Posterior cingulate gyrus (tissue), 11 donors: ENCODE measurements at regions of chr19 and their contacts with region 1.

Region 1: DNA sequence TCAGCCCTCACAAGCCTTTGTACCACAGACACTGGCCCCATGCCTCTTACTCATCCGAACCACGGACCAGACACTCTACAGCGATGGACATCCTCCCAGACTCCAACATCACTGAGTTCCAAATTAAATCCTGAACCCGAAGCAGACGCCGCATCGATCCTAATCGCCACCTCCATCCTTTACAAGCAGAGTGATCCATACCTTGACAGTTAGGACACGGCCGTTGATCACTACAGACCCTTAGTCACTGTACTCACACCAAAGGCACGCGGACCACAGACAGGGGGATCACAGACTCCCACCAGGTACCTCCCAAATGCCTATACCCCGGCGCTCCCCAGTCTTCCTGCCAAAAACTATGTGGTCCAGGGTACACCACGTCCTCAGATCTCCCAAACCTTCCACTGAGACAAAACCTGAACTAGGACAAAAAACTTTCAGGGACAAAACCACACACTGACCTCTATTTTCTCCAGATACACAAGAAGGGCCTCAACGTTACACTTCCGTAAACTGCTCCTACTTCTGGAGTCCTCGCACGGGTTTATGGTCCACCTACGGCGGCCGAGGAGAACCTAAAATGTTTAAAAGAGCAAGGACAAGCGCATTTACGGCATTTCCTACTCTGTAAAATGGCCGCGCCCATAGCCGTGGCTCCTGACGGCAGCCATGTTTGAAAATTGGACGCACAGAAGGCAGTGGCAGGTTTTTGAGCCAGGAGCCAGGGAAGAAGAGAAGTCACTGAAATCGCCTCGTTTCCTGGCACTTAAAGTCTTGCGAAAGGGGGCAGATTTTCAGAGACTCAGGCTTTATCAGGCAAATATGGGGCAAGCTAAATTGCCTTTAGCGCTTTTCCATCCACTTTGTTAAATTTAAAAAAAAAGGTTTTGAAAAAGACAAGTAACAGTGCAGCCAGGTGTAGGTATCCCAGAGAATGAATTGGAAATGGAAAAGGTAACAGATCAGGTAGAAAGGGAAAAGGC is at the start of gene ZNF350:
- DNase-seq: peak; percentile 90 to 99 (median 96)

Region 2: DNA sequence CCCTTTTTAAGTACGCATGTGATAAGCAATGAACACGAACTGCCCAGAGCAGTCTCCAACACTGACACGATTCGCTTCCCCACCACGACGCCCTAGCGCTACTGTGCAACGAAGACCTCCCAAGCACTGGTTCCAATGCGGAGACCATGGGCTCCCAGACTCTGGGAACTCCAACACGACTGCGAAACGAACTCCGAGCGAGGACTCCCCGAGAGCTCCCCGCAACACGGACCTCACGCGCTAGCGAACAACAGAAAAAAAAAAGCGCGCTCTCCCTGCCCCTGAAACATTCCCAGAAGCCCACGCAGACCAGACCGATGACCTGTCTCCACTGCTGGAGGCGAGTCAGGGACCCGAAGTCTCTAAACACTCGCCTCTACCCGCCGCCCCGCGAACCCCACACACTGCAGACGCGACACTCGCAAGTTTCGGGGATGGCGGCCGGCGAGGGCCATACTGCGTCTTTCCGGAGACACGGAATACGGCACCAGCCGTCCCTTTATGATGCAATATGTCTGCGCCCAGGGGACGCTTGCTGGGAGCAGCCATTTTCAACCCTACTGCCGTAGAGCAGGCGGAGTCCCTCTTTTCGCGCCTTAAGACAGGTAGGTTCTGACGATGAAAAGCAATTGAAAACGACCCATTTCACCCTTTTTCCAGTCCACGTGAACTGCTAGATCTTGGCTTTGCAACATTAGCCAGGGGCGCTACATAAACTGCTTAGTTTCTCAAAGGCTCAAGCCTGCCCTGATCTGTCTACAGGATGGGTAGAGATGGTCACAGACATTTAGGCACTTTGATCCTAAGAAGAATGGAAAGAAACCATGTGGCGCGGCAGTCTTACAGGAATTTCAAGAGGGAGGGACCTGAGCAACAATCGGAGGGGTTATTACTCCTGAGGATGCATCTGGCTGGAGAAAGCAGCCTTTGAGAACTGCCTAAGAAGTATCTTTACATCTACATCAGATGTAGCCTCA is 98.8 kb before region 1 on chr19 and contains the start of gene ZNF577:
- intact Hi-C with region 1: loop called (anchors 5 kb)
- DNase-seq: peak; percentile 73 to 98 (median 88)

Region 3: GRCh38 chr19:51926784-51927742 is 59.5 kb before region 1 on chr19 and contains the start of gene ZNF613:
- intact Hi-C with region 1: loop called (anchors 10 kb)
- DNase-seq: peak; percentile 81 to 98 (median 88)

Region 4: DNA sequence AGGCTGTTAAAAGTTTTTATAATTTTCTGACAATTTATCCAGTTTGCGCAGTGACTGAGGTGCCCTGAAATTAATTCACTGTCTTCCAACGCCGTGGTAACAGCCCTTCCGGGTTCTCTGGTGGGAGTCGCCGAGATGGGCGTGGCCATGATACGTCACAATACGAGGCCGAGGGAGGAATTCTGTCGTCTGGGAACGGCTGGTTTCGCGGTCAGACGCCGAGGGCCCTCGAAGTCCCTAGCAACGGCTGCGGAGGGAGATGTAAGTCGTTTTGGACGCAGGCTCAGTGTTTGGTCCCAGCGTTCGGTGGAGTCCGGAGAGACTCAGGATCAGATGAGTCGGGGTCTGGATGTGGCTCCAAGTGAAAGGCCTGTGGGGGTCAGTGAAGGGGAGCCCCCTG is 37.6 kb before region 1 on chr19:
- intact Hi-C with region 1: no loop called
- DNase-seq: peak in 7 of 10 donors; percentile 12 to 88 (median 33)

Region 5: GRCh38 chr19:52039169-52039568 is 52.6 kb after region 1 on chr19:
- intact Hi-C with region 1: no loop called
- DNase-seq: no peak